GM10248 (cell line): ENCODE measurements at regions of chr19 and their contacts with region 1.

Region 1: GRCh38 chr19:17390665-17391370 is 3.2 kb downstream of the CCDC194 start:
- DNase-seq: peak; percentile 95
- CTCF ChIP-seq: peak; percentile 95

Region 2: DNA sequence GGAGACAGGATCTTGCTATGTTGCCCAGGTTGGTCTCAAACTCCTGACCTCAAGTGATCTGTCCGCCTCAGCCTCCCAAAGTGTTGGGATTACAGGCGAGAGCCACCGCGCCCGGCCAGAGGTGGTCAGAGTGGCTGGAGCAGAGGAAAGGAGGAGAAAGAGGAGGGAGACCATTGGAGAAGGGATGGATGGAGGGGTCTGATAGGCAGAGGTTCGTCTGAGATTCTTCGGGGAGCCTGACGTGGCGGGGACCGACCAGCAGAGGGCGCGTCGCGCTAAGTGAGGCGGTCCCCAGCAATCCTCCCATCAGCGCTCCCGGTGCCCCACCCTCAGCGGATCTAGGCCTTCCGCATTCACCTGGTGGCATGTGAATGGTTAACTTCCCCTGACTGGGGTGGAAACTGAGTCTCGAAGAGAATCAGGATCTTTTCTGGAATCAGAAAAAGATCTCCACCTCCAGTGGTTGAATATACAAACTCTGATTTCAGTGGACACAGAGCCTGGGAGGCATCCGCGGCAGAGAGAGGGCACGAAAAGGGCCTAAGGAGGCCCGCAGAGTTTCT is 44.6 kb before region 1 on chr19:
- CTCF ChIA-PET with region 1: interaction called, 192 read pairs
- POLR2A ChIA-PET with region 1: interaction called, 3 read pairs
- DNase-seq: peak; percentile 89
- CTCF ChIP-seq: peak; percentile 95

Region 3: GRCh38 chr19:17358395-17358794 is 32.4 kb before region 1 on chr19:
- CTCF ChIA-PET with region 1: interaction called, 90 read pairs
- POLR2A ChIA-PET with region 1: no interaction called
- DNase-seq: no peak
- CTCF ChIP-seq: no peak

Region 4: GRCh38 chr19:17370026-17370587 is 20.7 kb before region 1 on chr19:
- CTCF ChIA-PET with region 1: interaction called, 90 read pairs
- POLR2A ChIA-PET with region 1: interaction called, 3 read pairs
- DNase-seq: peak; percentile 66
- CTCF ChIP-seq: no peak

Region 5: DNA sequence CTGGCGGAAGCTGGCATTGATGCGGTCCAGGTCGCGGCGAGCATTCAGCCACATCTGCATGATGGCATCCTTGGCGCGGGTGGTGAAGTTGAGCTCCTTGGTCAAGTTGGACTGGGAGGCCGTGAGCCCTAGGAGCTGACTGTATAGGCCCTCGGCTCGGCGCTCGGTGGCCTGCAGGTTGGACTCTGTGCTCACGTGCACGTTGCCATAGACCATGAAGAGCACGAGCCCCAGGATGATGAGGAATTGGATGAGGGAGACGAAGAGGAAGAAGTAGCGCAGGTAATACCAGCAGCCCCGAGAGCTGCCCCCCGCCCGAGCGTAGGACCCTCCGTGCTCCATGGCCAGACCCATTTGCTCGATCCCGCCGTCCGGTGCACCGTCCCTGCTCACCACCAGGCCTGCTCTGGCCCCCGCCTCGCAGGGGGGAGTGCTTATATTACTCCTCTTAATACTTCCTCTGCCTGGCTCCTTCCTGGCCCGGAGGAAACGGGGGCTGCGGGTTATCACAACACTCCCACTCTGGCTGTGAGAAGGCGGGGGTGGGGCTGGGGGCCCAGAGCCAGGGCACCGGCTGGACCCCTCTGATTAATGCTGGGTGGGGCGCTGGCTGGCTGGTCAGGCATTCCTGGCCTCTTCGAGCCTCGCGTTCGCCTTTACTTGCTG is 13.8 kb before region 1 on chr19 and contains the start of gene PLVAP:
- CTCF ChIA-PET with region 1: interaction called, 29 read pairs
- POLR2A ChIA-PET with region 1: no interaction called
- DNase-seq: no peak
- CTCF ChIP-seq: no peak

Region 6: GRCh38 chr19:17470068-17470841 is 79.4 kb after region 1 on chr19 and contains the start of gene SLC27A1:
- CTCF ChIA-PET with region 1: interaction called, 10 read pairs
- POLR2A ChIA-PET with region 1: no interaction called
- DNase-seq: peak; percentile 93
- CTCF ChIP-seq: no peak

Region 7: DNA sequence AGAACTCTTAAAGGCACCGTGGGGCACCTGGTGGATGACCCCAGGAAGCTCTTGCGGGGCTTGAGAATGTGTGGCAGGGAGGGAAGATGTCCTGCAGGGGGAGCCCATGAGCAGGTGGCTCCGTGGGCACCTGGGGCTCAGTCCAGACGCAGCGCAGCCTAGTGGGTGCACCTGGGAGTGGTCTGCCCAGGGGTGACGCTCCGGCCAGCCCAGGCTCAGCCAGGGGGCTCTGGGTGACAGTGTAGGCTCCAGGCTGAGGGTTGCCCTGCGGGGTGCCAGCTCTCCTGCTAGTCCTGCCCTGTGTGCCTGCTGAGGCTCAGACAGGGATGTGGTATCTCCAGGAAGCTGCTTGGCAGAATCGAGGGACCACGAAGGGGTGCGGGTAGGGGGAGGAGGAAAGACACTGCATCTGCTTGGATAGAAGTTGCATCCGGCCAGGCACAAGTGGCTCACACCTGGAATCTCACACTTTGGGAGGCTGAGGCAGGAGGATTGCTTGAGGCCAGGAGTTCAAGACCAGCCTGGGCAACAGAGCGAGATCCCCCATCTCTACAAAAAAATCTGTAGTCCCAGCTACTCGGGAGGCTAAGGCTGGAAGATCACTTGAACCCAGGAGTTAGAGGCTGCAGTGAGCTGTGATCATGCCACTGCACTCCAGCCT is 105.6 kb after region 1 on chr19:
- CTCF ChIA-PET with region 1: no interaction called
- POLR2A ChIA-PET with region 1: no interaction called
- DNase-seq: peak; percentile 90
- CTCF ChIP-seq: peak; percentile 96